GM18951 (cell line): ENCODE measurements at regions of chr10 and their contacts with region 1.

Region 1: GRCh38 chr10:71319042-71319799 is at the start of gene SLC29A3:
- POLR2A ChIP-seq: peak; percentile 68

Region 2: GRCh38 chr10:70619271-70620019 is 699.8 kb before region 1 on chr10:
- in situ Hi-C with region 1: no loop called
- POLR2A ChIP-seq: no peak

Region 3: GRCh38 chr10:71569775-71570588 is 250.8 kb after region 1 on chr10:
- in situ Hi-C with region 1: loop called (anchors 10 kb)
- POLR2A ChIP-seq: no peak